ENCODE measurements at regions of chr2 and their contacts with region 1.

Region 1: DNA sequence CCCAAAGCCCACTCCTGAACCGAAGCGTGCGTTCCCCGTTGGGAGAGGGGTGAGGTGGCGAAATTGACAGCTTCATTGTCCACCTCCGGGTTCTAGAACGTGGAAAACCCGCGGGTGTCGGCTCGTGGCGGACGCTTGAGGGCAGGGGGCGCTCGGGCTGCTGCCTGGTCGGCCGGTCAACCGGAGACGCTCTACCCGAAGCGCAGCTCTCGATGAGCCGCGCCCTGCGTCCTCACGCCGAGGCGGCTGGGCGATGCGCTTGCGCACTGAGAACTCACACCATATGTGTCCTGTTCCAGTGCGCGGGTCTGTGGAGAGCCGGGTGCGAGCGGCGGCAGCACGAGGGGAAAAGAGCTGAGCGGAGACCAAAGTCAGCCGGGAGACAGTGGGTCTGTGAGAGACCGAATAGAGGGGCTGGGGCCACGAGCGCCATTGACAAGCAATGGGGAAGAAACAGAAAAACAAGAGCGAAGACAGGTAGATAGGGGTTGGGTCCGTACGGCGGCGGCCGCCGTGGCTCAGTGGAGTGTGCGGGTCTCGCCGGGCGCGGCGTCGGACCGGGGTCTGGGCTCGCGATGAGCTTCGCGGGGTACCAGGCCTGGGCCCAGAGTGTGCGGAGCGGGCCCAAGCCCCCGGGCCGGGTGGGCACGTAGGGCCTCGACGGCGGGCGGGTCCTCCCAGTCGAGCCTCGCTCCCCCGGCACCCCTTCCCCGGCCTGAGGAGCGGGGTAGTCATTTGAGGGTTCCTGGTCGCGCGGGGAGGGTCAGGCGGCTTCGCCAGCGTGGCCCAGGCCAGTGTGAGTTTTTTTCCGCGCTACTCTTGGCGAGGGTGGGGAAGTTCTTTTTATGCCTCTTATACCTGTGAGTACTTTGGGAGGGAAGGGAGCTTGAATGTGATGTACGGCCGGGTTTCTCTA is at the start of gene EIF5B:
- DNase-seq: peak; percentile 93
- H3K4me3 Mint-ChIP-seq: no peak within 1 kb of the TSS
- H3K27ac Mint-ChIP-seq: no peak within 1 kb of the TSS
- H3K4me1 Mint-ChIP-seq: peaks cover 51% of the 10 kb centered on the region
- H3K27me3 Mint-ChIP-seq: no peaks in the 10 kb centered on the region
- total RNA-seq, gene EIF5B: 40.2 to 47.0 TPM

Region 2: GRCh38 chr2:99325363-99325762 is 12.0 kb before region 1 on chr2:
- CTCF ChIA-PET with region 1: interaction called, 11 read pairs
- POLR2A ChIA-PET with region 1: no interaction called
- DNase-seq: no peak
- H3K4me3 Mint-ChIP-seq: no peak overlapping the region
- H3K27ac Mint-ChIP-seq: no peak overlapping the region
- H3K4me1 Mint-ChIP-seq: peaks cover 7% of the 10 kb centered on the region
- H3K27me3 Mint-ChIP-seq: no peaks in the 10 kb centered on the region

Region 3: GRCh38 chr2:99348173-99348572 is 10.8 kb after region 1 on chr2:
- CTCF ChIA-PET with region 1: interaction called, 11 read pairs
- POLR2A ChIA-PET with region 1: no interaction called
- DNase-seq: no peak
- H3K4me3 Mint-ChIP-seq: no peak overlapping the region
- H3K27ac Mint-ChIP-seq: no peak overlapping the region
- H3K4me1 Mint-ChIP-seq: peaks cover 42% of the 10 kb centered on the region
- H3K27me3 Mint-ChIP-seq: no peaks in the 10 kb centered on the region

Region 4: GRCh38 chr2:99354070-99354469 is 16.7 kb after region 1 on chr2:
- CTCF ChIA-PET with region 1: interaction called, 11 read pairs
- POLR2A ChIA-PET with region 1: no interaction called
- DNase-seq: no peak
- H3K4me3 Mint-ChIP-seq: no peak overlapping the region
- H3K27ac Mint-ChIP-seq: no peak overlapping the region
- H3K4me1 Mint-ChIP-seq: peaks cover 27% of the 10 kb centered on the region
- H3K27me3 Mint-ChIP-seq: no peaks in the 10 kb centered on the region

Measured in activated CD4-positive, alpha-beta T cell treated with anti-CD3 and anti-CD28 coated beads, Interleukin-2, amount 10 ng/mL, durations not matched to agents 7 days and 5 days (primary cell).